ENCODE measurements at regions of chr17 and their contacts with region 1.

Region 1: GRCh38 chr17:69607162-69607834 is 192.8 kb downstream of the MAP2K6 start:
- DNase-seq: peak; percentile 57
- ATAC-seq: peak; percentile 87
- H3K4me3 ChIP-seq: no peak overlapping the region
- H3K27ac ChIP-seq: peak overlapping the region; percentile 47; the same call in 1 of the 2 replicates
- H3K4me1 ChIP-seq: peaks cover 8 to 10% of the 10 kb centered on the region in 2 experiments; a peak in 3 of 4 replicates
- H3K27me3 ChIP-seq: no peaks in the 10 kb centered on the region
- CTCF ChIP-seq: peak; percentile 66 to 98 (median 92)
- POLR2A ChIP-seq: no peak
- RAD21 ChIP-seq: peak; percentile 74

Region 2: DNA sequence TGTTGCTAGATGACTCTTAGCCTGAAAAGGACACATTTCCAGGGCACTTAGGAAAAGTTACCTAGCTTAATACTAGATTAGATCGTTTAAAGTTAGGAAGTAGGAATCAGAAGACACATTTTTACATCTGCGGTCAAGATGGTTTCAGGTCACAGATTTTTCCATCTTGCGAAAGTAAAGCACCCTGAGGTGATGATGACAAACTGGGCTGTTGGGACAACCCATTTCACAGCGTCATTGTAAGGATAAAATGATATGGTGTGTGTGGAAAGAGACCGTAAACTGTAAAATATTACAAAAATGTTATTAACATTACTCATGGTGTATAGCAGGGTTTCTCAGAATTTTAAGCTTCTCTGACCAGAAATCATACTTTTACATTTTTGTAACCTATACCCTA is 202.9 kb before region 1 on chr17:
- CTCF ChIA-PET with region 1: no interaction called
- POLR2A ChIA-PET with region 1: no interaction called
- RAD21 ChIA-PET with region 1: no interaction called
- intact Hi-C with region 1: no loop called
- DNase-seq: no peak
- ATAC-seq: no peak
- H3K4me3 ChIP-seq: no peak overlapping the region
- H3K27ac ChIP-seq: no peak overlapping the region
- H3K4me1 ChIP-seq: no peaks in the 10 kb centered on the region
- H3K27me3 ChIP-seq: no peaks in the 10 kb centered on the region
- CTCF ChIP-seq: no peak
- POLR2A ChIP-seq: no peak
- RAD21 ChIP-seq: no peak

Region 3: DNA sequence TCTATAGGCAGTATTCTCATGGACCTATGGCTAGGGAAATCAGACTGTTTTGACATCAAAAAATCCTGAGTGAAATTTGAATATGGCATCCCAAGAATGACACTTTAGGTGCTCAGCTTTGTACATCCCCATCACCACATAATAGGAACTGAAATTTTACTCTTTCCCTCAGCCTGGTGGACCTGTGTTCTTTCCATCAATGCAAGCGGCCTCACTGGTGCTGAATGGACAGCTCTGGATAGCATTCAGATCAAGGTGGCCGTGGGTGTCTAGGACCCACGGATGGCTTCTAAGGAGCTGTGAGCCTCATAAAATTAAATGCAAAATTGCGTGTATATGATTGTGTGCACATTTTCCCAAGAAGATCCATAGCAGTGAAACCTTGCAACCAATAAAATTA is 40.2 kb before region 1 on chr17:
- CTCF ChIA-PET with region 1: interaction called, 51 read pairs
- POLR2A ChIA-PET with region 1: no interaction called
- RAD21 ChIA-PET with region 1: no interaction called
- intact Hi-C with region 1: no loop called
- DNase-seq: no peak
- ATAC-seq: no peak
- H3K4me3 ChIP-seq: no peak overlapping the region
- H3K27ac ChIP-seq: no peak overlapping the region
- H3K4me1 ChIP-seq: peaks cover 0 to 4% of the 10 kb centered on the region in 2 experiments; a peak in 1 of 4 replicates
- H3K27me3 ChIP-seq: no peaks in the 10 kb centered on the region
- CTCF ChIP-seq: no peak
- POLR2A ChIP-seq: no peak
- RAD21 ChIP-seq: no peak

Region 4: DNA sequence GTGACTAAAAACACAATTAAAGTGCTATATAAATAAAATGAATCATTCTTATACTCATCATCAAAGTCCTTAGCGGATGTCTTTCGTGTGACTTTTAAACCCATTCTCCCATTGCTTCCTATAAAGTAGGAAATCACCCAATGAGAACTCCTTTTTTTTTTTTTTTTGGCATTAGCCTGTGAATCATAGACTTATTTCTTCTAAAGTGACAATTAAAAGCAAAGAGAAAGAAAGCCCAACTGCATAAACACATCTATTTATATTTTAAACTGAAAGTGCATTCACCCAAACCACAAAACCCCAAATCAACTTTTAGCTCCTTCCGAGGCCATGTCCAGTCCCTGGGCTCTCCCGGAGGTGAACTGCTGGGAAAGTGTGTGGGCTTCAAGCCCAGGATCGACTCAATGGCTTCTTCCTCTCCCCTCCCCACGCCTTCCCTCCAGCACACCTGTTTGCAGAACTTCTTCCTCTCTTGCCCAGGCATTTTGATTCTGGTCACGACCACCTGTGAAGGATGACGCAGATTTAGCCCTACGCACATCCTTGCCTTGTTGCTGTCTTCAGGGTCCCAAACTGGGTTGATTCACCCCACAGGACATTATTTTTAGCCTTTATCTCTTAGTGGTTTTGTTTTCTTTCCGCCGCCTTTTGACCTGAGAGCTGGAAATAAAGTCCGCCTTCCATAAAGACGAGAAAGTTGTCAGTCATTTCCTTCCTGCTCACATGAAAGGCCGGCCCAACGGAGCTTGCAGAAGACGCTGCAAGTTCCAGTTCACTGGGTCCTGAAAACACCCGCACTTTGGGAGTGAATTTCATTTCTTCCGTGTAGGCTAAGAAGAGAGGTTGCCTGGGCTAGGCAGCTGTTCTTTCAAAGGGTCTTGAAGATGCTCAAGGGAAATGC is 26.0 kb before region 1 on chr17:
- CTCF ChIA-PET with region 1: interaction called, 14 read pairs
- POLR2A ChIA-PET with region 1: interaction called, 4 read pairs
- RAD21 ChIA-PET with region 1: no interaction called
- intact Hi-C with region 1: no loop called
- DNase-seq: no peak
- ATAC-seq: no peak
- H3K4me3 ChIP-seq: no peak overlapping the region
- H3K27ac ChIP-seq: no peak overlapping the region
- H3K4me1 ChIP-seq: no peaks in the 10 kb centered on the region
- H3K27me3 ChIP-seq: peaks cover 8% of the 10 kb centered on the region
- CTCF ChIP-seq: no peak
- POLR2A ChIP-seq: no peak
- RAD21 ChIP-seq: no peak

Region 5: DNA sequence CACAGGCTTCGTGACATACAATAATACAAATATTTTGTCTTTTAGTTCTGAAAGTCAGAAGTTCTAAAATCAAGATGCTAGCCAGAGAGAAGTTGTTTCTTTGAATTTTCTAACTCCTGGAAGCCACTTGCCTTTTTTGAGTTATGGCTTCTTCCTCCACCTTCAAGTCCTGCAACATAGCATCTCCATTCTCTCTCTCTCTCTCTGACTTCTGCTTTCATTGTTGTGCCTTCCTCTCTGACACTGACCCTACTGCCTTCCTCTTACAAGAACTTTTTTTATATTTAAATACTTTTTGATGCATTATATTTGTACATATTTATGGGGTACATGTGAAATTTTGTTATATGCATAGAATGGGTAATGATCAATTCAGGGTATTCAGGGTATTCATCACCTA is 13.1 kb after region 1 on chr17:
- CTCF ChIA-PET with region 1: interaction called, 11 read pairs
- POLR2A ChIA-PET with region 1: no interaction called
- RAD21 ChIA-PET with region 1: no interaction called
- intact Hi-C with region 1: no loop called
- DNase-seq: no peak
- ATAC-seq: no peak
- H3K4me3 ChIP-seq: no peak overlapping the region
- H3K27ac ChIP-seq: no peak overlapping the region
- H3K4me1 ChIP-seq: no peaks in the 10 kb centered on the region
- H3K27me3 ChIP-seq: no peaks in the 10 kb centered on the region
- CTCF ChIP-seq: no peak
- POLR2A ChIP-seq: no peak
- RAD21 ChIP-seq: no peak

Region 6: DNA sequence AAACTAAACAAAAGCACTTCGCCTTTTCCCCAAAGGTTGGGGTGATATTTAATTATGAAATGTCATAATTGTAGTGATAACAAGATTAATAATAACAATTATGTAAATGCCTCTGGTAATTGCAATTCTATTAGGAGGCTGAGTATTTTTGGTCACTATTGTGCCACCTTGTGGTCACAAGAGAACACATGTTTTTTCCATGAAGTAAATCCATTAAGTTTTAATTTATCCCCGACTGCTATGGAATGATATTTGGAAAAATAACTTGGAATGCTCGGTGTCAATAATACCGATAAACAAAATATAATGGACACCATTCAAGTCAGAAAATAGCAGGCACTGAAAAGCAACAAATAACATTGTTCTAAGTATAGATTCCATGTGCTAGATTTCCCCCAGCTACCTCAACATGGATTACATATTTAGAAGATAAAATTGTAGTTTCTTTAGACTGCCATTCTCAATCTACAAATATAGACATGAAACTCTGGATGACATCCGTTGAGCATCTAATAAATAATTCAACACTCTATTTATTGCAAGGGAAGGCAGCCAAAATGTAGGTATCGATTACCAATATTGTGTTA is 537.1 kb after region 1 on chr17:
- CTCF ChIA-PET with region 1: interaction called, 38 read pairs
- POLR2A ChIA-PET with region 1: no interaction called
- RAD21 ChIA-PET with region 1: interaction called in 1 of 2 experiments, 4 read pairs
- intact Hi-C with region 1: loop called (anchors 2 kb)
- DNase-seq: peak; percentile 12
- ATAC-seq: 0 out of 2 replicates have a peak, but pooled peaks have one; percentile 46
- H3K4me3 ChIP-seq: no peak overlapping the region
- H3K27ac ChIP-seq: no peak overlapping the region
- H3K4me1 ChIP-seq: no peaks in the 10 kb centered on the region
- H3K27me3 ChIP-seq: no peaks in the 10 kb centered on the region
- CTCF ChIP-seq: peak; percentile 34 to 71 (median 48); a peak in 4 of 6 replicates
- POLR2A ChIP-seq: no peak
- RAD21 ChIP-seq: peak; percentile 52

Region 7: GRCh38 chr17:70552230-70552981 is 945.1 kb after region 1 on chr17:
- CTCF ChIA-PET with region 1: interaction called, 34 read pairs
- POLR2A ChIA-PET with region 1: no interaction called
- RAD21 ChIA-PET with region 1: no interaction called
- intact Hi-C with region 1: loop called (anchors 5 kb)
- DNase-seq: peak; percentile 29
- ATAC-seq: peak; percentile 77
- H3K4me3 ChIP-seq: no peak overlapping the region
- H3K27ac ChIP-seq: no peak overlapping the region
- H3K4me1 ChIP-seq: no peaks in the 10 kb centered on the region
- H3K27me3 ChIP-seq: no peaks in the 10 kb centered on the region
- CTCF ChIP-seq: peak; percentile 24 to 76 (median 39); a peak in 3 of 6 replicates
- POLR2A ChIP-seq: no peak
- RAD21 ChIP-seq: peak; percentile 58

Region 8: GRCh38 chr17:70622368-70623260 is 1015.3 kb after region 1 on chr17:
- CTCF ChIA-PET with region 1: interaction called, 15 read pairs
- POLR2A ChIA-PET with region 1: no interaction called
- RAD21 ChIA-PET with region 1: no interaction called
- intact Hi-C with region 1: loop called (anchors 2 kb)
- DNase-seq: peak; percentile 38
- ATAC-seq: peak; percentile 86
- H3K4me3 ChIP-seq: no peak overlapping the region
- H3K27ac ChIP-seq: no peak overlapping the region
- H3K4me1 ChIP-seq: no peaks in the 10 kb centered on the region
- H3K27me3 ChIP-seq: no peaks in the 10 kb centered on the region
- CTCF ChIP-seq: peak; percentile 53 to 83 (median 80); a peak in 5 of 6 replicates
- POLR2A ChIP-seq: no peak
- RAD21 ChIP-seq: peak; percentile 73

Measured in HCT116 (cell line).